Left cardiac atrium (tissue), 4 donors: ENCODE measurements at regions of chr1 and their contacts with region 1.

Region 1: GRCh38 chr1:211813590-211813989 is 17.0 kb downstream of the LPGAT1 start:
- DNase-seq: peak; percentile 51
- ATAC-seq: peak; percentile 85 to 91

Region 2: DNA sequence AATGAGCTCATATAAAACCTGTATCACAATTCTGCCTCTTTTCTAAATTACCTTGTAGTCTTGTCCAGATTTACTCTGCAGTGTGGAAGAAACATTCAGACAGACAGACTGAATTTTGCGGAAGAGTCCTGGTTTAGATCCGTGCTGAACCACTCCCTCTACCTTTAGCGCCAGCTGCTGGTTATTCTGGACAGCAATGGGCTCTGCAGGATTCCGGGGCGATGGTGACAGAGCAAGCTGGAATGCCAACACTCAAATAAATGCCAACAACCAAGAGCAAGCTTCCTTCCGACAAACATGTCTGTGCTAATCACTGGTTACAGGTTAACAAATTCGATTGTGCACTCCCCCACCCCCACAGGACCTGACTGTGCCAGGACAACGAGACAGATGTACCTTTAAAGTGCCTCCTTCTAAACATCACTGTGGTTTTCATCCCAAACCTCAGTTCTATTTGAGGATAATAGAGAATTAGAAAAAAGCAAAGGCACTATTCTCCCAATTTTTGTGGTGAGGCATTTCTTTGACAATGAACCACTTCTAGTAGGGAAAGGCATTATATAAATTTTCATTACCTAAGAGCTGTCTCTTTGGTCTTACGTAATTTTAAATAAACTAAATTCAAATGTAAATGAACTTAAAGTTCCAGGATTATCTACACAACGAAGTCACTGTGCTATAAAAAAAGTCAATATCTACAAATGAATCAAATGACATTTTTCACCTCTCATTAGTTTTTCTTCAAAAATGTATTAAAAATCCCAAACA is 131.3 kb after region 1 on chr1:
- intact Hi-C with region 1: loop called in 1 of 2 experiments (anchors 10 kb)
- DNase-seq: no peak
- ATAC-seq: peak; percentile 90 to 92